ENCODE measurements at regions of chr18 and their contacts with region 1.

Region 1: DNA sequence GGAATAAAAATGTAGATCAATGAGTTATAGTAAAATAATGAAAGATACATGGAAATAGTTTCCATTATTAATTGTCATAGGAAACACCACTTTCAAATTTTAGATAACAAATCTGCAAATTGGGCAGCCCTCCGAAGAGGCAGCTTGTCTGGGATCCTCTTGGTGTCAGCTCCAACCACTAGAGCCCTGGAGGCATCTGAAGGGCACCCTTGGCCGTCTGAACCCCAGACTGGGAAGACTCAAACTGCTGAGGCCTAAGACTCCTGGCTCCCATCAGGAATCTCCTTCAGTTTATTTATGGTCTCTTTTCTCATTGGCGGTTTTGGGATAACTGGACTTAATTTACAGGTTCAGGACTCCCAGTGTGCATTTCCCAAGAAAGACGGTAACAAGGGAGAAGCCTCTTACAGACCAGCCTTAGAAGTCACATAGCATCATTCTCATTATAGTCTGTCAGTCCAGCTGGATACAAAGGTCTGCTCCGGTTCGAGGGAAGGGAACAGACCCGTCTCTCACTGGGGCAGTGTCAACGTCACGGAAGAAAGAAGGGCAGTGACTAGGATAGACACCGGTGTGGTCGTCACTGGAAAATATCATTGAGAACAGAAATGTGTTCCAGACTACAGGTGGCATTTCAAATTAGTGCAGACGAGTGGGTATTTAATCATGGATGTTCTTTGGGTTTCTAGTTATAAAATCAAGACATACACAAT is 390.7 kb upstream of the NETO1 start:
- DNase-seq: no peak
- H3K4me3 ChIP-seq: no peak overlapping the region
- H3K27ac ChIP-seq: no peak overlapping the region
- H3K4me1 ChIP-seq: no peaks in the 10 kb centered on the region
- H3K27me3 ChIP-seq: no peaks in the 10 kb centered on the region
- CTCF ChIP-seq: no peak
- EP300 ChIP-seq: no peak
- POLR2A ChIP-seq: no peak

Region 2: GRCh38 chr18:72895548-72895947 is 363.0 kb before region 1 on chr18:
- in situ Hi-C with region 1: no loop called
- intact Hi-C with region 1: no loop called
- DNase-seq: no peak
- H3K4me3 ChIP-seq: no peak overlapping the region
- H3K27ac ChIP-seq: no peak overlapping the region
- H3K4me1 ChIP-seq: no peaks in the 10 kb centered on the region
- H3K27me3 ChIP-seq: no peaks in the 10 kb centered on the region
- CTCF ChIP-seq: no peak
- EP300 ChIP-seq: no peak
- POLR2A ChIP-seq: no peak

Region 3: GRCh38 chr18:73199151-73199550 is 59.4 kb before region 1 on chr18:
- in situ Hi-C with region 1: loop called in 1 of 4 experiments (anchors 10 kb)
- intact Hi-C with region 1: no loop called
- DNase-seq: no peak
- H3K4me3 ChIP-seq: no peak overlapping the region
- H3K27ac ChIP-seq: no peak overlapping the region
- H3K4me1 ChIP-seq: no peaks in the 10 kb centered on the region
- H3K27me3 ChIP-seq: no peaks in the 10 kb centered on the region
- CTCF ChIP-seq: no peak
- EP300 ChIP-seq: no peak
- POLR2A ChIP-seq: no peak